Sigmoid colon (tissue), 7 donors: ENCODE measurements at regions of chr9 and their contacts with region 1.

Region 1: DNA sequence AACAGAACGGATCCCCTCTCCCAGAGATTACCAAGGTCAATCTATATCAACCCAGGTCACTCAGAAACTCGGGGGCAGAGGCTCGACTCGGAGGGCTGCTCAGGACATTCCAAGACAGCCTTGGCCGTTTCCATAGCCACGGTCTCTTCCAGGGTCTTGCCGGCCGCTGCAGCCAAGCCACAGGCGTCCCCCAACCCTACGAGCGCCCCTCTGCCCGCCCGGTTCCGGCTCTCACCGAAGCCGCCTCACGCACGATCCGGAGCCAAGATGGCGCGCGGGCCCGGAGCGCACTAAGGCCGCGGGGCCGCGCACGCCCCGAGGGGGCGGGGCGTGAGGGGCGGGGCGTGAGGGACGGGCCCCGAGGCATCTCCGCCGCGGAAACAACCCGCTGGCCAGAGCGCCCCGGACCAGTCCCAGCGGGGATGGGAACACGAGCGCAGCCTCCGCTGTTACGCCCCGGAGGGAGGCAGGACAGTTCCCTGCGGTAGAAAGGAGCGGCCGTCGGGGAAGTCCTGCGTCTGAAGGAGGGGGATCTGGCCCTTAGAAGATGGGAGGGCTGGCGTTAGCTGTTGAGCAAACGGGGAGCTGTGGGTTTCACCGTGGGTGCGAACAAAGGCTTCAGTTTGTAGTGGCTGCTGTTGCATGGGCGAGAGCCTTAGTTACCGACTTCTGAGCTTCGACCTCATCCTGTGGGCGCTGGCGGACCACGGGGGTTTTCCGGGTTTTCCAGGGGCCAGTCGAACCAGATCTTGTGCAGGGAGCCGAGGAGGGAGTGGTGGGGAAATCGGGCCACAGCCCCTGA is at the start of gene RPP25L:
- DNase-seq: peak; percentile 94
- H3K4me3 ChIP-seq: peak within 1 kb of the TSS; percentile 61 to 70 (median 65)
- H3K27ac ChIP-seq: peak within 1 kb of the TSS; percentile 78 to 84 (median 82)
- H3K4me1 ChIP-seq: peaks cover 0 to 26% (median 21%) of the 10 kb centered on the region in 4 donors
- H3K27me3 ChIP-seq: no peaks in the 10 kb centered on the region
- CTCF ChIP-seq: no peak
- EP300 ChIP-seq: no peak
- POLR2A ChIP-seq: peak; percentile 55 to 76
- total RNA-seq, gene RPP25L: 23.3 to 44.3 (median 31.5) TPM

Region 2: GRCh38 chr9:34458013-34458958 is 153.7 kb before region 1 on chr9 and contains the starts of genes DNAI1 and FAM219A:
- intact Hi-C with region 1: loop called (anchors 1 kb)
- DNase-seq: peak; percentile 99
- H3K4me3 ChIP-seq: peak within 1 kb of the TSS; percentile 59 to 96 (median 70)
- H3K27ac ChIP-seq: peak within 1 kb of the TSS; percentile 82 to 88 (median 84)
- H3K4me1 ChIP-seq: peaks cover 0 to 36% (median 22%) of the 10 kb centered on the region in 4 donors
- H3K27me3 ChIP-seq: no peaks in the 10 kb centered on the region
- CTCF ChIP-seq: no peak
- EP300 ChIP-seq: no peak
- POLR2A ChIP-seq: peak; percentile 55 to 79
- total RNA-seq, gene DNAI1: under 0.01 TPM in 1 of 4 donors, not detected in the others
- total RNA-seq, gene FAM219A: 7.4 to 10.2 (median 8.8) TPM

Region 3: GRCh38 chr9:34633851-34634550 is 22.0 kb after region 1 on chr9:
- intact Hi-C with region 1: loop called (anchors 1 kb)
- DNase-seq: peak; percentile 79
- H3K4me3 ChIP-seq: no peak overlapping the region
- H3K27ac ChIP-seq: no peak overlapping the region
- H3K4me1 ChIP-seq: peaks cover 0 to 38% (median 35%) of the 10 kb centered on the region in 4 donors
- H3K27me3 ChIP-seq: peaks cover 7 to 12% (median 8%) of the 10 kb centered on the region in 3 donors
- CTCF ChIP-seq: peak; percentile 77 to 83 (median 81)
- EP300 ChIP-seq: no peak
- POLR2A ChIP-seq: no peak

Region 4: DNA sequence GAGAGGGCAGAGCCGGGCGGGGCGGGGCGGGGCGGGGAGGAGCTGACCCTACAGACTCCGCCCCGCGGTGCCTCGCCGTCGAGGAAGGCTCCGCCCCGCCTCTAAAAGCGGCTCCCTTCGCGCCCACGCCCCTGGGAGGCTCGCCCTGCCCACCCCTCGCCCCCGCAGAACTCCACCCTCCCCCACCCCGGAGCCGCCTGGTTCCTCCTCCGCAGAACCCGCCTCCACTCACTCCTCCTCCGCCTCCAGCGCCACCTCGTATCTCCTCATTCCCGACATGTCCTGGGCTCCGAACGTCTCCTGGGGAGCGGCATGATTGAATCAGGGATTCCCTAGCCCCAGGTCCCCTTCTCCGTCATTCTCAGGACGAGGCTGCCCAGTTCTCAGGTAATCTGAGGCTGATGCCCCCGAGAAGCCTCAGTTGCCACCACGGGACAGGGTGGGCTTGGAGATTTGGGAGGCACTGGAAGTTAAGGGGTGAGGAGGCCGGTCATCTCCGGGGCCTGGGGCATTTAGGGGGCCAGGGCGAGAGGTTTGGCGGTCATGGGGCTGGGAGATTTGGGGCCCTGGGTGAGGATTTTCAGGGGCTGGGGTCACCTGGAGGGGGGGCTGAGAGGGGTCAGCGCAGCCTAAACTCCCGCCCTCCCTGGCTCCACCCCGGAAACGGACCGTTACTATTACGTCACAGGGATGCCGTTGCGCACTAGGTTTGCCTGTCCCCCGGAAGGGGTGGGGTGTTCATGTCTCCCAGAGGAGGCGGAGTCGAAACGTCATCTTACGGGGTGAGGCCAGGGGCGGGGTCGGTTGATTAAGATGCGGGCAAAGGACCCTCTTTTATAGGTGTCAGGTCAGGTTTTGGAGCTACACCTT is 53.6 kb after region 1 on chr9:
- intact Hi-C with region 1: loop called (anchors 2 kb)
- DNase-seq: peak; percentile 99
- H3K4me3 ChIP-seq: peak overlapping the region; percentile 72 to 81 (median 78)
- H3K27ac ChIP-seq: peak overlapping the region; percentile 96 to 100 (median 100)
- H3K4me1 ChIP-seq: peaks cover 0 to 25% (median 19%) of the 10 kb centered on the region in 4 donors
- H3K27me3 ChIP-seq: no peaks in the 10 kb centered on the region
- CTCF ChIP-seq: no peak
- EP300 ChIP-seq: peak in 2 of 4 donors; percentile 10 to 48
- POLR2A ChIP-seq: peak; percentile 92 to 94

Region 5: GRCh38 chr9:34701769-34702736 is 90.0 kb after region 1 on chr9:
- intact Hi-C with region 1: loop called (anchors 2 kb)
- DNase-seq: peak; percentile 93
- H3K4me3 ChIP-seq: peak overlapping the region; percentile 56 to 72 (median 62)
- H3K27ac ChIP-seq: peak overlapping the region; percentile 78 to 86 (median 80)
- H3K4me1 ChIP-seq: peaks cover 0 to 11% (median 5%) of the 10 kb centered on the region in 4 donors
- H3K27me3 ChIP-seq: no peaks in the 10 kb centered on the region
- CTCF ChIP-seq: peak; percentile 90 to 98 (median 95)
- EP300 ChIP-seq: no peak
- POLR2A ChIP-seq: no peak